Endothelial cell of umbilical vein (primary cell): ENCODE measurements at regions of chr19 and their contacts with region 1.

Region 1: DNA sequence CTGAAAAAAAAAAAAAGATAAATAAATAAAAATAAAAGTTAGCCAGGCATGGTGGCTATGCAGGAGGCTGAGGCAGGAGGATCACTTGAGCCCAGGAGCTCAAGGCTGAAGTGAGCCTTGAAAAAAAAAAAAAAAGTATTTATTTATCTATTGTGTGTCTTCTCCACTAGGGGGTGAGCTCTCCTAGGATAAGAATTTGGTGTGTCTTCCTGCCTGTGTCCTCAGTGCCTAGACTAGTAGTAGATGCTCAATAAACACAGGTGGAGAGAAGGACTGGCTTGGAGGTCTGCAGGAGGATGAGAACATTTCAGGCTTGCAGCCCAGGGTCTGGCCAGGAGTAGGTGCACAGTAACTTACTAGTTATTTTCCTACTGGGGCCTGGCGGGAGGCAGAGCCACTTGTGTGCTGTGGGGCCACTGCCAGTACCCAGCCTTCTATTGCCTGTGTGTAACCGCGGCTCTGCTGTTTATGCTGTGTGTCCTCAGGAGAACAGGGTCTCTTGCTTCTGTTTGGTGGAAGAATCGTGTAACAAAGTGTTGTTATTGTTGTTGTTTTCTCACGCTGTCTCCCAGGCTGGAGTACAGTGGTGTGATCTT is 5.4 kb downstream of the LMTK3 start:
- DNase-seq: no peak
- H3K4me3 ChIP-seq: no peak overlapping the region
- H3K27ac ChIP-seq: no peak overlapping the region
- H3K4me1 ChIP-seq: no peaks in the 10 kb centered on the region
- H3K27me3 ChIP-seq: peaks cover 0 to 4% of the 10 kb centered on the region in 2 experiments
- CTCF ChIP-seq: peak; percentile 30 to 35
- POLR2A ChIP-seq: no peak

Region 2: GRCh38 chr19:48487996-48488395 is 18.2 kb before region 1 on chr19:
- CTCF ChIA-PET with region 1: interaction called, 17 read pairs
- POLR2A ChIA-PET with region 1: no interaction called
- dilution Hi-C with region 1: no loop called
- intact Hi-C with region 1: no loop called
- DNase-seq: peak; percentile 60
- H3K4me3 ChIP-seq: no peak overlapping the region
- H3K27ac ChIP-seq: no peak overlapping the region
- H3K4me1 ChIP-seq: peaks cover 9% of the 10 kb centered on the region
- H3K27me3 ChIP-seq: peaks cover 3 to 7% of the 10 kb centered on the region in 2 experiments
- CTCF ChIP-seq: no peak
- POLR2A ChIP-seq: no peak

Region 3: DNA sequence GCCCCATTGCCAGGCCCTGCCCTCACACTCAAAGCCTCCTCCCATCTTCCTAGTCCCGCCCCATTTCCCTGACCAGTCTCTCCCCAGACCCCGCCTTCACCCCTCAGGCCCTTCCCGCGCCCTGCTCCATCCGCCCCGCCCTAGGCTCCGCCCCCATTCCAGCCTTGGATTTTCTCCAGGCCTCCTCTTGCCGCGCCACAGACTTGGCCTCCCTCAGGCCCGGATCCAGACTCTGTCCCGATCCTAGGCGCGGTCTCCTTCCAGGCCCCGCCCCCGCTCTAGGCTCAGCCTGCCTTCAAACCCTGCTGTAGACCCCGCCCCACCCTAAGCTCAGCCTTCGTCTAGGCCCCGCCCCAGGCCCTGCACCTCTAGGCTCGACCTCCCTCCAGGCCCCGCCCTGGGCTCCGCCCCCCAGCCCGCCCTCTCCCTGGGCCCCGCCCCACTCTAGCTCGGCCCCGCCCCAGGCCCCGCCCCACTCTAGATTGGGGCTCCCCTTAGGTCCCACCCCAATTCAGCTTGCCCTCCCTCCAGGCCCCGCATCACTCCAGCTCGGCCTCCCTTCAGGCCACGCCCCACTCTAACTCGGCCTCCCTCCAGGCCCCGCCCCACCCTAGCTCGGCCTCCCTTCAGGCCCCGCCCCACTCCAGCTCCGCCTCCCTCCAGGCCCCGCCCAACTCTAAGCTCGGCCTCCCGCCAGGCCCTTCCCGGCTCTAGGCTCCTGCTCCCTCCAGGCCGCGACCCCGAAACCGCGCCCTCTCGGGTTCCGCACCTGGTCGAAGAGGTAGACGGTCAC is 13.1 kb before region 1 on chr19:
- CTCF ChIA-PET with region 1: interaction called, 17 read pairs
- POLR2A ChIA-PET with region 1: no interaction called
- dilution Hi-C with region 1: no loop called
- intact Hi-C with region 1: no loop called
- DNase-seq: peak; percentile 97
- H3K4me3 ChIP-seq: peak overlapping the region; percentile 57 to 69 (median 62)
- H3K27ac ChIP-seq: no peak overlapping the region
- H3K4me1 ChIP-seq: peaks cover 16% of the 10 kb centered on the region
- H3K27me3 ChIP-seq: peaks cover 3 to 11% of the 10 kb centered on the region in 2 experiments
- CTCF ChIP-seq: no peak
- POLR2A ChIP-seq: peak; percentile 73

Region 4: GRCh38 chr19:48558018-48558684 is 51.9 kb after region 1 on chr19:
- CTCF ChIA-PET with region 1: interaction called, 11 read pairs
- POLR2A ChIA-PET with region 1: no interaction called
- dilution Hi-C with region 1: no loop called
- intact Hi-C with region 1: no loop called
- DNase-seq: no peak
- H3K4me3 ChIP-seq: no peak overlapping the region
- H3K27ac ChIP-seq: no peak overlapping the region
- H3K4me1 ChIP-seq: peaks cover 5% of the 10 kb centered on the region
- H3K27me3 ChIP-seq: no peaks in the 10 kb centered on the region
- CTCF ChIP-seq: no peak
- POLR2A ChIP-seq: no peak

Region 5: GRCh38 chr19:48568345-48568886 is 62.2 kb after region 1 on chr19:
- CTCF ChIA-PET with region 1: interaction called, 12 read pairs
- POLR2A ChIA-PET with region 1: no interaction called
- dilution Hi-C with region 1: no loop called
- intact Hi-C with region 1: no loop called
- DNase-seq: peak; percentile 83
- H3K4me3 ChIP-seq: peak overlapping the region in 1 of 3 experiments; percentile 17
- H3K27ac ChIP-seq: no peak overlapping the region
- H3K4me1 ChIP-seq: peaks cover 2% of the 10 kb centered on the region
- H3K27me3 ChIP-seq: no peaks in the 10 kb centered on the region
- CTCF ChIP-seq: no peak
- POLR2A ChIP-seq: no peak

Region 6: DNA sequence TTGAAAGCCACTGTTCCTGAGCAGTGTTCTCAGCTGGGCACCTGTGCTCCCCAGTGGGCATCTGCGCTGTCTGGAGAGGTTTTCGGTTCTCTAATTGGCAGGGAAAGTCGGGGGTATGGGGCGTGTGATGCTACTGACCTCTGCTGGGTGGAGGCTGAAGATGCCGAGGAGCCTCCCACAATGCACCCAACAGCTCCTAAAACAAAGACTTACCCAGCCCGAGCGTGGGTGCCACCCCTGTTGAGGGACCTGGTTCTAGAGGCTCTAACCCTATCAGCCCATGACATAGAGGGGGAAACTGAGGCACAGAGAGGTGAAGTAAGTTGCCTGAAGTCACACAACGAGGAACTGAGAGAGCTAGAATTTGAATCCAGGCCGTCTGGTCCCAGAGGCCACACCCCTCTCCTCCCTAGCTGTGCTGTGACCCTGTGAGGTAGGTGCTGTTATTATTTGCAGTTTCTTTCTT is 102.6 kb after region 1 on chr19:
- CTCF ChIA-PET with region 1: interaction called, 16 read pairs
- POLR2A ChIA-PET with region 1: no interaction called
- dilution Hi-C with region 1: no loop called
- intact Hi-C with region 1: no loop called
- DNase-seq: no peak
- H3K4me3 ChIP-seq: no peak overlapping the region
- H3K27ac ChIP-seq: no peak overlapping the region
- H3K4me1 ChIP-seq: no peaks in the 10 kb centered on the region
- H3K27me3 ChIP-seq: no peaks in the 10 kb centered on the region
- CTCF ChIP-seq: peak; percentile 39 to 41
- POLR2A ChIP-seq: no peak

Region 7: DNA sequence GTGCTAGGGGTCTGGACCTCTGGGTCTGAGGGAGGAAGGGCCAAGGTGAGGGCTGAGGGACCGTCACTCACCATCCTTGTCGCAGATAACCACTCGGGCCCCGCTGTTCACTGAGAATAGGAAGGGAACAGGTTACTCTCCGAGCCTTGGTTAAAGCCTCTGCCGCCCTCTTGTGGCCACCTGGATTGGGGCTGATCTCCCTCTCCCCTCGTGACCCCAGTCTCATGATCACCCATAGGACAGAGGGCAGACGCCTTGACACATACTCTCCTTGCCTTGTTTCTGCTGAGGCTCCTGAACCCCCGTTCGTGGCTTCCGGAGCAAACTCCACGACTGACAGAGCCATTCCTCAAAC is 329.5 kb after region 1 on chr19:
- CTCF ChIA-PET with region 1: no interaction called
- POLR2A ChIA-PET with region 1: no interaction called
- dilution Hi-C with region 1: no loop called
- intact Hi-C with region 1: no loop called
- DNase-seq: peak; percentile 87
- H3K4me3 ChIP-seq: peak overlapping the region; percentile 38 to 61 (median 57)
- H3K27ac ChIP-seq: peak overlapping the region; percentile 52
- H3K4me1 ChIP-seq: peaks cover 5% of the 10 kb centered on the region
- H3K27me3 ChIP-seq: no peaks in the 10 kb centered on the region
- CTCF ChIP-seq: peak; percentile 88 to 92
- POLR2A ChIP-seq: no peak